HepG2 (cell line): ENCODE measurements at regions of chr3 and their contacts with region 1.

Region 1: DNA sequence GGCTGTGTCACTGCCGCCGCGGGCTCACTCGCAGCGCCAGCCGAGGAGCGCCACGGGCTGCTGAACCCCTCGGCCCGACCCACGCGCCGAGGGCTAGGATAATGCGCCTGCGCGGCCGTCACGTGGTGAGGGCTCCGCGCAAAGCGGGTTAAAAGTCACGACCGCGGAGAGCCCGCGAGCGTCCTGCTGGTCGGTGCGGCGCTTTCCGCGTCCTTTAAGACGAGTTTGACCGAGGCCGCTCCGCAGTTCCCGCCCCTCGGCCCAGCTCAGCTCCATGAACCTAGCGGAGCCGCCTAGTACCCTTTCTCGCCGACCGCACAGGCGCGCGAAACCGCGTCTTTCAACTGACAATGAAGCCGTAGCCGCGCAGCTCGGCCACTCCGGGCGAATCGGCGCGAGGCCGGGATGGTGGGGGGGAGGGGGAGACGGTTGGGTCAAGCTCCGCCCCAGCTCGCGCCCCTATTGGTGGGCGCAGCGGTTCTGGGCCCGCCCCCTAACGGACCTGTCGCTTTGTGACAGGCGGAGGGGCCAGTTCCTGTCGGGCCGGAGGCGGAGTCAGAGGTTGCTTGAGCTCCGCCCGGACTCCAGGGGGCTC is 636 bp upstream of the STT3B start:
- DNase-seq: peak; percentile 94
- ATAC-seq: peak; percentile 89
- H3K4me3 ChIP-seq: peak overlapping the region; percentile 91 to 97 (median 91); a peak in 5 of 6 replicates
- H3K27ac ChIP-seq: peak overlapping the region; percentile 99
- H3K4me1 ChIP-seq: peaks cover 33% of the 10 kb centered on the region
- H3K27me3 ChIP-seq: no peaks in the 10 kb centered on the region; a peak in 1 of 5 replicates
- CTCF ChIP-seq: peak; percentile 52
- EP300 ChIP-seq: peak in 1 of 2 experiments; percentile 42; a peak in 1 of 4 replicates
- POLR2A ChIP-seq: peak; percentile 87 to 95
- RAD21 ChIP-seq: peak; percentile 77

Region 2: DNA sequence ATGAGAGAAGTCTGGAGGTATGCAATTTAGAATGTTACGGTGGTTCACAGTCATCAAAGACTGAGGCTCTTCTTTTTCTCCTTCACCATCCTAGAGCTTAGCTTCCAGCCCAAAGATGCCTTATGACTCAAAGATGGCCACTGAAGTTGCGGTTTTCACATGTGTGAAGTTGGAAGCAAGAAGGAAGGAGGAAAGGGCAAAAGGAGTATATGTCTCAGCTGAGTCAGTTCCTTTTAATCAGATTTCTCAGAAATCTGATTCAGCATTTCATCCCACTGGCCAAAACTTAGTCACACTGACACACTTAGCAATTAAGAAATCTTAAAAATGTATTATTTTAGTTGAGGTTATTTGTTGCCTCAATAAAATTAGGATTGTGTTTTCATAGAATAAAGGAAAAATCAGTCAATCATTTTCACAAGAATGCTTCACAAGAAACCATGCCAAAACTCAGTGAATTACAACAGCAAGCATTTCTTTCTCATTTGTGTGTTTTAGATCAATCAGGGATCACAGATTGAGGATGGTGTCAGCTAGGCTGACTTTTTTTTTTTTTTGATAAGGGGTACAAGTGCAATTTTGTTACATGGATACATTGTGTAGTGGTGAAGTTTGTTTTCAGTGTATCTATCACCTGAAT is 426.5 kb before region 1 on chr3:
- CTCF ChIA-PET with region 1: no interaction called
- POLR2A ChIA-PET with region 1: no interaction called
- in situ Hi-C with region 1: no loop called
- intact Hi-C with region 1: no loop called
- DNase-seq: no peak
- ATAC-seq: no peak
- H3K4me3 ChIP-seq: no peak overlapping the region
- H3K27ac ChIP-seq: no peak overlapping the region
- H3K4me1 ChIP-seq: no peaks in the 10 kb centered on the region
- H3K27me3 ChIP-seq: no peaks in the 10 kb centered on the region
- CTCF ChIP-seq: no peak
- EP300 ChIP-seq: no peak
- POLR2A ChIP-seq: no peak
- RAD21 ChIP-seq: no peak

Region 3: DNA sequence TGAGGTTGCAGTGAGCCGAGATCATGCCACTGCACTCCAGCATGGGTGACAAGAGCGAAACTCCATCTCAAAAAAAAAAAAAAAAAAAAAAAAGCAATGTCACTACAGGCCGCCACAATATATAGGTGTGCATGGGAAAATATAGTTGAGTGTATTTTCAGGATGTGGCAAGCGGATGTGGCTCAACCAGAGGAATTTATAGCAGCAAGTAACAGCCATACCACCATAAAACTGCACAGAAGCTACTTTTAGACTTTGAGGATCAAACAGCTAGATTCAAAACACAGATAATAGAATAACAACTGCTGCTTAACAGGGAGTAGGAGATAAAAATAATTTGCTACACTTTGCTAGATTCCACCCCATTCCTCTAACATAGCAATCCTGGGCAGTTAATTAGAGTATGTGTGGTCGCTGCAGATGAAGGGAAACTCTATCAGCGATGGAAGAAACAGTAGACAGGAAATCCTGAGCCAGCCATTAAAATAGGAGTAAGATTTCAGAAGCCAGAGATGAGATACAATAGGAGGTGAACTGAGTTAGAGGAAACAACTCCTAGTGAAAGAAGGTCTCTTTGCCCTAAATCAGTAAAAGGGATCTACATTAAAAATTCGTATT is 318.1 kb before region 1 on chr3:
- CTCF ChIA-PET with region 1: no interaction called
- POLR2A ChIA-PET with region 1: no interaction called
- in situ Hi-C with region 1: no loop called
- intact Hi-C with region 1: no loop called
- DNase-seq: no peak
- ATAC-seq: no peak
- H3K4me3 ChIP-seq: no peak overlapping the region
- H3K27ac ChIP-seq: no peak overlapping the region
- H3K4me1 ChIP-seq: no peaks in the 10 kb centered on the region
- H3K27me3 ChIP-seq: no peaks in the 10 kb centered on the region
- CTCF ChIP-seq: no peak
- EP300 ChIP-seq: no peak
- POLR2A ChIP-seq: no peak
- RAD21 ChIP-seq: no peak

Region 4: DNA sequence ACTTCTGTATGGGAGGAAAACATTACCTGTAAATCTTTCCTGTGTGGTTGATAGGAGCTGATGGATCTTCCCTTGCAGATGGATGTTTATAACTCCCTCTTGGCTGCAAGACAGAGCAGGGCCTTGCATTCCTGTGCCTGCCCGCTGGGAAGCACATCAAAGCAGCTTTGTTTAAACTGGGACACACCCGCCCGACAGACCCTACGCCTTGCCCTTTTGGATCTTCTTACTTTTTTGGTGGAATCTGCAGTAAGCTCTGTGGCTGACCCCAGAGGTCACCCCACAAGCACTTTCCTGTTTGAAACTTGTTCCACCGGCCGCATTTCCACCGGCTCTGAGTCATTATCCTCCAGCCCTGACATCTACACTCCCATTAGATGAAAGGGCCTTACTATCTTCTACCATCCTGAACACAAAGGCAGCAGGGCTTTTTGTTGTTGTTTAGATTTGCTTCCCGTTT is 243.4 kb before region 1 on chr3:
- CTCF ChIA-PET with region 1: no interaction called
- POLR2A ChIA-PET with region 1: interaction called, 16 read pairs
- in situ Hi-C with region 1: no loop called
- intact Hi-C with region 1: loop called (anchors 2 kb)
- DNase-seq: peak; percentile 97
- ATAC-seq: peak; percentile 89
- H3K4me3 ChIP-seq: peak overlapping the region in 1 of 3 experiments; percentile 7; a peak in 1 of 6 replicates
- H3K27ac ChIP-seq: peak overlapping the region; percentile 75
- H3K4me1 ChIP-seq: peaks cover 97% of the 10 kb centered on the region
- H3K27me3 ChIP-seq: no peaks in the 10 kb centered on the region
- CTCF ChIP-seq: 0 out of 2 replicates have a peak, but pooled peaks have one; percentile 13
- EP300 ChIP-seq: peak in 1 of 2 experiments; percentile 94; a peak in 2 of 4 replicates
- POLR2A ChIP-seq: no peak
- RAD21 ChIP-seq: no peak

Region 5: GRCh38 chr3:31377045-31377642 is 154.9 kb before region 1 on chr3:
- CTCF ChIA-PET with region 1: no interaction called
- POLR2A ChIA-PET with region 1: interaction called, 19 read pairs
- in situ Hi-C with region 1: no loop called
- intact Hi-C with region 1: loop called (anchors 5 kb)
- DNase-seq: peak; percentile 100
- ATAC-seq: peak; percentile 98
- H3K4me3 ChIP-seq: no peak overlapping the region; a peak in 1 of 6 replicates
- H3K27ac ChIP-seq: peak overlapping the region; percentile 74
- H3K4me1 ChIP-seq: peaks cover 50% of the 10 kb centered on the region
- H3K27me3 ChIP-seq: no peaks in the 10 kb centered on the region; a peak in 1 of 5 replicates
- CTCF ChIP-seq: 0 out of 2 replicates have a peak, but pooled peaks have one; percentile 12
- EP300 ChIP-seq: peak; percentile 99 to 100
- POLR2A ChIP-seq: no peak
- RAD21 ChIP-seq: peak; percentile 44; the same call in 1 of the 2 replicates

Region 6: DNA sequence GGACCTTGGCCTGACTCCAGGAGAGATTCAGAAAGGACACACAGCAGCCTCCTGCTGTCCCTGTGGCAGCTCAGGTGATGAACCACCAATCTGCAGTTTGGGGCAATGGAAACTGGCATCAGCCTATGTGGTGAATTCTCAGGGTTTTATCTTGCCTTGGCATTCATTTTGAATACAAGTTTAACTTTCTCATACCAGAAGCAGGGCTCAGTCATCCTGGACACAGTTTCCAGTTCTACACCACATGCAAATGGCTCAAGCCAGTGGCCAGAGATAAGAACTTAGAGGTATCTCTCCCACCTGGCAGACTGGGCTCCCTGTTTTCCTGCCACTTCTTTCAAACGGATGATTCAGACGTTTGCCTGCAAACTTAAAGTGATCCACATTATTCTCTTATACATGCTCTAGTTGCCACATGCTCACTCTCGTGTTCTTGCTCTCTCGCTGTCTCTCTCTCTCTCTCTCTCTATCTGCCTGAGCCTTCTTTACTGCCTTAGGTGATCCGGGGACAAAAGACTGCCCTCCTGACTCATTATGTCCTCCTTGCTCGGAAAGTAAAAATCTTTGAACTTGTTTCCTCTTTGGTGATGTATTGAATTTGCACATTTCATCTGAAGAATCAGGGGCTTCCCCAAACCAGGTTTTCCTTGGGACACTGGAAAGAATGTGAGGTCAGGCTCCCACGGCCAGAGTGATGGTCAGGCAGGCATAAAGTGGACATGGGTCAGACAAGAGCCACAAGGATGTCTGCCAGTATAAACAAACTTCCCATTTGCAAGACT is 99.0 kb before region 1 on chr3:
- CTCF ChIA-PET with region 1: no interaction called
- POLR2A ChIA-PET with region 1: no interaction called
- in situ Hi-C with region 1: no loop called
- intact Hi-C with region 1: no loop called
- DNase-seq: no peak
- ATAC-seq: no peak
- H3K4me3 ChIP-seq: no peak overlapping the region
- H3K27ac ChIP-seq: no peak overlapping the region
- H3K4me1 ChIP-seq: peaks cover 7% of the 10 kb centered on the region
- H3K27me3 ChIP-seq: peaks cover 0 to 1% of the 10 kb centered on the region in 2 experiments; a peak in 1 of 5 replicates
- CTCF ChIP-seq: no peak
- EP300 ChIP-seq: no peak
- POLR2A ChIP-seq: no peak
- RAD21 ChIP-seq: no peak

Region 7: GRCh38 chr3:31472479-31473390 is 59.4 kb before region 1 on chr3:
- CTCF ChIA-PET with region 1: no interaction called
- POLR2A ChIA-PET with region 1: no interaction called
- in situ Hi-C with region 1: no loop called
- intact Hi-C with region 1: no loop called
- DNase-seq: no peak
- ATAC-seq: no peak
- H3K4me3 ChIP-seq: no peak overlapping the region
- H3K27ac ChIP-seq: no peak overlapping the region
- H3K4me1 ChIP-seq: peaks cover 12% of the 10 kb centered on the region
- H3K27me3 ChIP-seq: no peaks in the 10 kb centered on the region
- CTCF ChIP-seq: no peak
- EP300 ChIP-seq: no peak
- POLR2A ChIP-seq: no peak
- RAD21 ChIP-seq: no peak

Region 8: GRCh38 chr3:31768479-31769123 is 236.5 kb after region 1 on chr3:
- CTCF ChIA-PET with region 1: no interaction called
- POLR2A ChIA-PET with region 1: no interaction called
- in situ Hi-C with region 1: no loop called
- intact Hi-C with region 1: loop called (anchors 10 kb)
- DNase-seq: peak; percentile 52
- ATAC-seq: peak; percentile 83
- H3K4me3 ChIP-seq: no peak overlapping the region
- H3K27ac ChIP-seq: no peak overlapping the region
- H3K4me1 ChIP-seq: peaks cover 27% of the 10 kb centered on the region
- H3K27me3 ChIP-seq: no peaks in the 10 kb centered on the region
- CTCF ChIP-seq: peak; percentile 78
- EP300 ChIP-seq: no peak
- POLR2A ChIP-seq: no peak
- RAD21 ChIP-seq: peak; percentile 50; the same call in 1 of the 2 replicates